AG04450 (cell line): ENCODE measurements at regions of chr13 and their contacts with region 1.

Region 1: GRCh38 chr13:45280751-45281634 is 60.0 kb downstream of the TPT1 start:
- DNase-seq: peak; percentile 54
- H3K4me3 ChIP-seq: no peak overlapping the region
- H3K27ac ChIP-seq: no peak overlapping the region
- H3K27me3 ChIP-seq: no peaks in the 10 kb centered on the region
- CTCF ChIP-seq: peak; percentile 88

Region 2: DNA sequence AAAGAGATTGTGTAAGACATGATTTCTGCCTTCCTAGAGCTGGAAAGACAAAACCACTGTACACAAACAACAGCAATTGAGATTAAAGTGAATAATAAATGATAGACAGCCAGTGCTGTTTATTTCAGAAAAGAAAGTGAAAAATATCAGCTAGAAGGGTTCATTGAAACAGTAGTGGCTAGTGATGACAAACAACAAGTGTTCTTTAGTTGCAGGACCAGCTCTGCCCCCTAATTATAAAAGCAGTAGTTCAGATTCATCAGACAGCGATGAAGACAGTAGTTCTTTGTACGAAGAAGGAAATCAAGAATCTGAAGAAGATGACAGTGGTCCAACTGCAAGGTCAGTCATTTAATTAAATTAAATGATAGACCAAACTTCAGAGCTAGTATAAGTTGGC is 276.9 kb before region 1 on chr13:
- CTCF ChIA-PET with region 1: no interaction called
- POLR2A ChIA-PET with region 1: no interaction called
- DNase-seq: no peak
- H3K4me3 ChIP-seq: no peak overlapping the region
- H3K27ac ChIP-seq: no peak overlapping the region
- H3K27me3 ChIP-seq: no peaks in the 10 kb centered on the region
- CTCF ChIP-seq: no peak

Region 3: DNA sequence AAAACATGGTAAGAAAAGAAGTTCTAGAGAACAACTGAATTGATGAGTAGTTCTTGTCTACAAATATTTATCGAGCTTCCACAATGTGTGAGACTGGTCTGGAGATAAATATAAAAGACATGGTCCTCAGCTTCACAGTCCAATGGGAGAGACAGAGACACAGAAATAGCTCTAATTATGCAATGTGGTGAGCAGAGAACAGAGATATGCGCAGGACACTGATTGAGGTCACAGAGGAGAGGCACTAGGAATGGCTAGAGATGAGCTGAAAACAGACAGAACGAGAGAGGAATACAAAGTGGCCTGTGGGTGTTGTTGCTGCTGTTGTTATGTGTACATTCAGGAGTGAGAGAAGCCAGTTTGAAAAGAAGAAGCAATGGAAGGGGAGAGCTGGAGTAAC is 238.5 kb before region 1 on chr13:
- CTCF ChIA-PET with region 1: interaction called, 125 read pairs
- POLR2A ChIA-PET with region 1: no interaction called
- DNase-seq: no peak
- H3K4me3 ChIP-seq: no peak overlapping the region
- H3K27ac ChIP-seq: peak overlapping the region; percentile 39
- H3K27me3 ChIP-seq: no peaks in the 10 kb centered on the region
- CTCF ChIP-seq: no peak

Region 4: DNA sequence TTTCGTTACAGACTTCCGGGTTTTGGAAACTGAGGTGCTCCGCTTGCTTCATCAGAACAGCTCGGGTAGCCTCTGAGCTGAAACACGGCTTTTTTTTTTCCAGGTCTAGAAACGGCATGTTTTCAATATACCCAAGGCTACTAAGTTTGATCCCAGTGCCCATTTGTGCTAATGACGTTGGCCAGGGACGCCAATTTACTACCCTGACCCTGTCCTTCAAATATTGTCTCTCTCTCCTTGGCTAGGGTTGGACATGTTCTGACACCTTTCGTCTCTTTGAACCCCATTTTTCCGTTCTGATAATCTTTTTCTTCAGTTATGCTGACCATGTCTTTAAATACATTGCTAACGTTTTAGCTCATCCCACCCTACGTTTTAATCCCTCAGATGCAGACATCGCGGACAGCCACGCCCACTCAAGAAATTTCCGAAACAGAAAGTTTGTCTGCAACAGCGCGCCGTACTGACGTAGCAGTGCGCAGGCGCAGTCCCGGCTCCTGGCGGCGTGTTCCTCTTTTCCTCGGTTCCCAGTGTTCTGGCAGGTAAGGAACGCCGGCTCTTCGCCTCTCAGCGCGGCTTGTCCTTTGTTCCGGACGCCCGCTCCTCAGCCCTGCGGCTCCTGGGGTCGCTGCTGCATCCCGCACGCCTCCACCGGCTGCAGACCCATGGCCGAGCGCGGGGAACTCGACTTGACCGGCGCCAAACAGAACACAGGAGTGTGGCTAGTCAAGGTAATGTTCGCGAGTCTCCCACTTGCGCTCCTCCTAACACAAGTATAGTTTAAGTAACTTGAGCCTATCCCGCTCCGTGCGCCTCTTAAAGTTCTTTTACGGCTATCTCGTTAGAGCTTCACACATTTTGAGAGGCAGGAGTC is 160.8 kb before region 1 on chr13 and contains the start of gene GTF2F2:
- CTCF ChIA-PET with region 1: interaction called, 11 read pairs
- POLR2A ChIA-PET with region 1: no interaction called
- DNase-seq: peak; percentile 82
- H3K4me3 ChIP-seq: peak within 1 kb of the TSS; percentile 96
- H3K27ac ChIP-seq: peak within 1 kb of the TSS; percentile 91
- H3K27me3 ChIP-seq: no peaks in the 10 kb centered on the region
- CTCF ChIP-seq: no peak
- polyA plus RNA-seq, gene GTF2F2: 30.7 and 44.3 TPM in 2 replicates

Region 5: GRCh38 chr13:45269204-45269603 is 11.8 kb before region 1 on chr13:
- CTCF ChIA-PET with region 1: interaction called, 11 read pairs
- POLR2A ChIA-PET with region 1: no interaction called
- DNase-seq: no peak
- H3K4me3 ChIP-seq: no peak overlapping the region
- H3K27ac ChIP-seq: no peak overlapping the region
- H3K27me3 ChIP-seq: no peaks in the 10 kb centered on the region
- CTCF ChIP-seq: no peak

Region 6: DNA sequence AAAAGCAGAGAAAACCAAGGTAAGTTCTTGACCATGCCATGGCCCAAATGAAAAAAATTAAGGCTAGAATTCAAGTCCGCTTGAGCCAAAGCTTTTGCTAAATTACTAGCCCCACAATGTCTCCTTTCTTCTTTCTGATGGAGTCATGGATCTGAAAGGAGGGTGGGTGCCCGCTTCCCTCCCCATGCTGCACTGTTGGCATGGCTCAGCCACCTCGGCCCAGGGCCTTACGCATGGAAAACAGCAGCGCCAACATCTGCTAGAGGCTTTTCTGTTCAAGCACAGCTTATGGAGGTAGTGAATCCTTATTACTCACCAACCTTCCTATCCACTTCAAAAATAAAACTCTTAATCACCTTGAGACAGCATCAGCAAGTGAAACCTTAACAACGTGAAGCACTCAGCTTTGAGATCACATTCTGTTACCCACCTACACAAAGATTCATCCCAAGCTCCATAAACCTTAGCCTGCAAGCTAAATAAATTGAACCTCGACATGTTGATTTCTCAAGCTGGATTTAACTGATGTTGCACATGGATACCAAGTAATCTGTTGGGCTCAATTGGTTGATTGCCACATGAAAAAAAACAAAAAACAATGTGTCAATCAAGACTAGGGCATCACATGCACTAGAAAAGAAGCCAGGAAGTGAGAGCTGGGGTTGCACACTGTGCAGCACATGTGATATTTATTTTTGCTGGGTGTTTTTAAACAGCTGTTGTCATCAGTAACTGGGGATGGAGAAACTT is 16.6 kb after region 1 on chr13:
- CTCF ChIA-PET with region 1: interaction called, 16 read pairs
- POLR2A ChIA-PET with region 1: no interaction called
- DNase-seq: no peak
- H3K4me3 ChIP-seq: no peak overlapping the region
- H3K27ac ChIP-seq: no peak overlapping the region
- H3K27me3 ChIP-seq: no peaks in the 10 kb centered on the region
- CTCF ChIP-seq: no peak